ENCODE measurements at regions of chr12 and their contacts with region 1.

Region 1: GRCh38 chr12:4148418-4149056 is 125.0 kb upstream of the CCND2 start:
- DNase-seq: peak in 1 of 9 donors; percentile 37
- ATAC-seq: peak; percentile 80
- H3K4me3 ChIP-seq: no peak overlapping the region
- H3K4me3 Mint-ChIP-seq: no peak overlapping the region
- H3K27ac ChIP-seq: no peak overlapping the region
- H3K27ac Mint-ChIP-seq: peak overlapping the region in 5 of 9 donors; percentile 14 to 70 (median 61)
- H3K4me1 ChIP-seq: peaks cover 13 to 41% of the 10 kb centered on the region in 2 donors
- H3K4me1 Mint-ChIP-seq: peaks cover 20 to 93% (median 34%) of the 10 kb centered on the region in 7 donors
- H3K27me3 ChIP-seq: no peaks in the 10 kb centered on the region
- H3K27me3 Mint-ChIP-seq: no peaks in the 10 kb centered on the region

Region 2: GRCh38 chr12:4030929-4031702 is 117.4 kb before region 1 on chr12:
- CTCF ChIA-PET with region 1: no interaction called
- POLR2A ChIA-PET with region 1: interaction called, 8 read pairs
- intact Hi-C with region 1: loop called in 1 of 2 experiments (anchors 2 kb)
- DNase-seq: peak; percentile 62 to 83 (median 74)
- ATAC-seq: peak; percentile 95
- H3K4me3 ChIP-seq: peak overlapping the region; percentile 50
- H3K4me3 Mint-ChIP-seq: peak overlapping the region; percentile 60 to 87 (median 84)
- H3K27ac ChIP-seq: peak overlapping the region; percentile 75
- H3K27ac Mint-ChIP-seq: peak overlapping the region in 8 of 9 donors; percentile 60 to 92 (median 86)
- H3K4me1 ChIP-seq: peaks cover 13 to 33% of the 10 kb centered on the region in 2 donors
- H3K4me1 Mint-ChIP-seq: peaks cover 22 to 54% (median 47%) of the 10 kb centered on the region in 7 donors
- H3K27me3 ChIP-seq: no peaks in the 10 kb centered on the region
- H3K27me3 Mint-ChIP-seq: peaks cover 0 to 33% (median 0%) of the 10 kb centered on the region in 5 donors

Region 3: DNA sequence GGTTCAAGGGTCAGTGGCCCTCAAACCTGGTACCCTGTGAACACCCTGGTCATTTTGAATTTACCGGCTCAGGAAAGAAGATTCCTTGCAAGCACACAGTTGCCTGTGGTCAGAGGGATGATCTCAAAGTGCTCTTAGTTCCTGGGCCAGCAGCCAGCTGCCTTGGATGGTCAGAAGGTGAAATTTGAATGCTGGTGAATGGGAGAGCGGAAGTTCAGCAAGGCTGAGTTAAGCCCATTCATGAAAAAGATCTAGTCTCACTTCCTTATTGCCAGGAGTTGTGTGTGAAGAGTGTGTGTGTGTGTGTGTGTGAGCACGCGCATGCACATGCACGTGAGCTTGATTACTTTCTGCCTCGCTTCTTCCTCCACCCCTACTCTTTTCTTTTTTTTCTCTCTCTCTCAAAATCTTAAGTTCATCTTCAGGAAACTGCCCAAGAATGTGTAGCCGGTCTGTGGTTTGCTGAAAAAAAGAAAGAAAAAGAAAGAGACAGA is 30.5 kb before region 1 on chr12:
- CTCF ChIA-PET with region 1: interaction called, 3 read pairs
- POLR2A ChIA-PET with region 1: no interaction called
- intact Hi-C with region 1: loop called in 1 of 2 experiments (anchors 1 kb)
- DNase-seq: peak in 6 of 9 donors; percentile 20 to 54 (median 32)
- ATAC-seq: peak; percentile 83
- H3K4me3 ChIP-seq: peak overlapping the region; percentile 17
- H3K4me3 Mint-ChIP-seq: peak overlapping the region; percentile 18 to 87 (median 78)
- H3K27ac ChIP-seq: no peak overlapping the region
- H3K27ac Mint-ChIP-seq: peak overlapping the region; percentile 22 to 86 (median 78)
- H3K4me1 ChIP-seq: peaks cover 29 to 30% of the 10 kb centered on the region in 2 donors
- H3K4me1 Mint-ChIP-seq: peaks cover 25 to 66% (median 44%) of the 10 kb centered on the region in 7 donors
- H3K27me3 ChIP-seq: no peaks in the 10 kb centered on the region
- H3K27me3 Mint-ChIP-seq: no peaks in the 10 kb centered on the region

Region 4: DNA sequence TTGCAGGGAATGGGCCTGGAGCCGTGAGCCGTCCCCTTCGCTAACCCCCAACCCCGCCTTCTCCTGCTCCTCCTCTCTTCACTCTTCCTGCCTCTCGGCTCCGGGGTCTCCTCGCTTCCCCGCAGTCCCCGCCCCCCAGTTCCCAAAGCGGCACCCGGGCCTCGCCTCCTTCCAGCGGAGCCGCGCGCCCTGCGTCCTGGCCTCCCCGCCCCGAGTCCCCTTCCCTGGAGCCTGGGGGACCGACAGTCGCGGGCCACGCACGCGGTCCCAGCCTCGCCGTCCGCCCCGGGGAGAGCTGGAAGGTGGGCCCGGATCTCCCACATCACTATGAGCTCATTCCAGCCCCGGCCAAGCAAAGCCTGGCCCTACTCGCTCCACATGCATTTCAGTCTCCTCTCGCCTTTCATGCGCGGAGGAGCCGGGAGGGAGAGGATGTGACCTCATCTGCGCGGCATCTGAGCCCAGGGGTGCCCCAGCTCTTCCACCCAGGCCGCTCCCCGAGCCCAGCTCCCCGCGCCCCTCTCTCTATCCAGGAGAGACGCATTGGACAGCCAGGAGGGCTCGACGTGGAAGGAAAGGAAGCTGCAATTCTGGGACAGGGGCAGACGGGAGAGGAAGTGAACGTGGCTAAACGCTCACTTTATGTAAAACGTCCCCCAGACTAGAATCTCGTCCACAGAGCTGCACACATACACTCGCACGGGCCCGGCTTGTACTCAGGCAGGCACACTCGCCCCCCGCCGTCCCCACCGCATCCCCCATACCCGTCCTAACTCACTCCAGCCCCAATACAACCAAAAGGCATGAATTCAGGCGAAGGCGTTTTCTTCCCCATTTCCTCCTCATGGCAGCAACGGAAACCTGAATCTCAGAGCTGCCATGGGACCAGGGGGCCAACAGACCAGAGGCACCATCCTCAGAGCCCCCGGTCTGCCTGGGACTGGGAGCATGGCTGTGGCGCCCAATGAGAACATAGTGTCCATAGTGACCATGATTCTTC is 16.3 kb after region 1 on chr12:
- CTCF ChIA-PET with region 1: interaction called, 10 read pairs
- POLR2A ChIA-PET with region 1: interaction called, 6 read pairs
- intact Hi-C with region 1: loop called (anchors 2 kb)
- DNase-seq: peak; percentile 43 to 65 (median 58)
- ATAC-seq: peak; percentile 93
- H3K4me3 ChIP-seq: peak overlapping the region; percentile 64
- H3K4me3 Mint-ChIP-seq: peak overlapping the region; percentile 82 to 94 (median 88)
- H3K27ac ChIP-seq: peak overlapping the region; percentile 71
- H3K27ac Mint-ChIP-seq: peak overlapping the region; percentile 82 to 98 (median 88)
- H3K4me1 ChIP-seq: peaks cover 4 to 6% of the 10 kb centered on the region in 2 donors
- H3K4me1 Mint-ChIP-seq: peaks cover 13 to 61% (median 20%) of the 10 kb centered on the region in 7 donors
- H3K27me3 ChIP-seq: no peaks in the 10 kb centered on the region
- H3K27me3 Mint-ChIP-seq: no peaks in the 10 kb centered on the region

Region 5: GRCh38 chr12:4178424-4179170 is 30.1 kb after region 1 on chr12:
- CTCF ChIA-PET with region 1: interaction called, 3 read pairs
- POLR2A ChIA-PET with region 1: no interaction called
- intact Hi-C with region 1: loop called in 1 of 2 experiments (anchors 1 kb)
- DNase-seq: no peak
- ATAC-seq: no peak
- H3K4me3 ChIP-seq: no peak overlapping the region
- H3K4me3 Mint-ChIP-seq: peak overlapping the region in 1 of 10 donors; percentile 43
- H3K27ac ChIP-seq: no peak overlapping the region
- H3K27ac Mint-ChIP-seq: peak overlapping the region in 1 of 9 donors; percentile 64
- H3K4me1 ChIP-seq: no peaks in the 10 kb centered on the region
- H3K4me1 Mint-ChIP-seq: peaks cover 0 to 22% (median 0%) of the 10 kb centered on the region in 7 donors
- H3K27me3 ChIP-seq: no peaks in the 10 kb centered on the region
- H3K27me3 Mint-ChIP-seq: peaks cover 0 to 5% (median 0%) of the 10 kb centered on the region in 5 donors

Measured in naive thymus-derived CD4-positive, alpha-beta T cell (primary cell).